Esophagus muscularis mucosa (tissue), 4 donors: ENCODE measurements at regions of chr6 and their contacts with region 1.

Region 1: GRCh38 chr6:133973109-133973971 is 20.3 kb downstream of the TBPL1 start:
- DNase-seq: no peak
- H3K4me3 ChIP-seq: no peak overlapping the region
- H3K27ac ChIP-seq: peak overlapping the region; percentile 1 to 59 (median 34)
- H3K4me1 ChIP-seq: peaks cover 12 to 46% (median 30%) of the 10 kb centered on the region in 4 donors
- H3K27me3 ChIP-seq: no peaks in the 10 kb centered on the region
- CTCF ChIP-seq: peak; percentile 79 to 82 (median 80)
- EP300 ChIP-seq: no peak
- POLR2A ChIP-seq: no peak

Region 2: DNA sequence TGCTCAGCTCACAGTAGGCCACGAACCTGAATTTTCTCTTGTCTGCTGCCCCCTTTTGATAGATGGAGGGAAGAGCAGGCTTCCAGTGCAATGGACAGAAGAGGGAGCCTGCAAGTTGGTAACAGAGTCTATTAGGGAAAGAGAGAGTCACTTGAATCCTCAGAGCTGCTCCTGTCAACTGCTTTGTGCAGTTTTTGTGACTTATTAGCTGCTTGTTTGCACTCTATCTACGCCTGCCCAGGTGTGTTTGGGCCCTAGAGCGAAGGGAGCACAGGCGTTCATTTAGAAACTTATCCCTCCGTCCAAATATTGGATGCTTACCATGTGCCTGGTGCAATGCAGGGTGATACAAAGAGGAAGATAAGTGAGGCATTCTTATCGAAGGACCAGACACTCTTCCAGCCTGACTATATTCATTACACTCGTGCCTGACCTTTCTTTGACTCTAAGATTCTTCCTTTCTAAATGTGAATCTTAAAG is 90.7 kb after region 1 on chr6:
- intact Hi-C with region 1: loop called (anchors 1 kb)
- DNase-seq: no peak
- H3K4me3 ChIP-seq: no peak overlapping the region
- H3K27ac ChIP-seq: peak overlapping the region; percentile 69 to 81 (median 80)
- H3K4me1 ChIP-seq: peaks cover 30 to 49% (median 43%) of the 10 kb centered on the region in 4 donors
- H3K27me3 ChIP-seq: no peaks in the 10 kb centered on the region
- CTCF ChIP-seq: peak; percentile 85 to 93 (median 87)
- EP300 ChIP-seq: no peak
- POLR2A ChIP-seq: no peak